GM10248 (cell line): ENCODE measurements at regions of chr15 and their contacts with region 1.

Region 1: DNA sequence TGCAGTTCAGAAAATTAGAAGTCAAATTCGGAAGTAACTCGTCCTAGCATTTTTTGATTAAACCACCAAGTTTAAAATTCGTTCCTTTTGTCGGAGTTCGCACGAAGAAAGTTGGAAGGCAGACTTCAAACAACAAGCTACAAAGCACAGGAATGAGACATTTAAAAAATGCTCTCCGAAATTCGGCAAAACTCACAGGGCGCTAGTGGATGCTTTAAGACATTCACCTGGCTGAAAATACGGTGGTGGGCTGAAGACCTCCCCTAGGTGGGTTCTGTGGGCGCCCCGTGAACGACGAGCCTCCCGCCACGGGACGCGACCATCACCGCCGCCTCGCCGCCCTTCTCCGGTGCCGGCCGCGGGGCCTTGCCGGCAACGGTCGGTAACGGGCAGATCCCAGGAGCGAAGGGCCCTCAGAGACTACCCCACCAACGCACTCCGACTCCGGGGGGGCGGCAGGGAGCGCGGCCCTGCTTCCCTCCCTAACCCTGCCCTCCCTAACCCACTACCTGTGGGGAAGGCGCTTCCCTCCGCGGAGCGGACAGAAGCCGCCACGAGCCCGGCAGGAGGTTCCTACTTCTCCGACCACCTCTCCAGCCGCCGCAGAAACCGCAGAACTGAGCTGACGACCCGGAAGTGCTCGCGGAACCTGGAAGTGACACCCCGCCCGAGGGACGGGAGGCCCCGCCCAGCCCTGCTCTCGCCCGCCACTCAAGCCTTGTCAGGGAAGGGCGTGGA is at the start of gene GTF2A2:
- DNase-seq: peak; percentile 95
- CTCF ChIP-seq: no peak

Region 2: DNA sequence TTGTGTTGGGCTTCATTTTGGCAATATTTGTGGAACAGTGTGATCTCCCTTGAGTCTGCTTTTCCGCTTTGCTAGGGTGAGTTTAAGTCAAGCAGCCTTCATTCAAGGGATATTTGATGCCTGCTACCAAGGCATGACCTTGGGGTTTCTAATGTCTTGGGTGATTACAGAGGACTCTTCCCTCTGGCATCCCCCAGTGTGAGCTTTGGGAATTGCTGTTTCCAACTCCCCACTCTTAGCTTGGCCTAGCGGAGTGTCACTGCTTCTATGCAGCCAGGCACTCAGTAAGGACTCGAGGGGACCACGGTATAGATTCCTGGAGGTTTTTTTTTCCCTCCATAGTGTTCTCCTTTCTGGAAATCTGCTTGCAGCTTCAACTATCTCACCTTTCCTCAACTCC is 24.4 kb before region 1 on chr15:
- CTCF ChIA-PET with region 1: interaction called, 15 read pairs
- POLR2A ChIA-PET with region 1: no interaction called
- DNase-seq: no peak
- CTCF ChIP-seq: no peak

Region 3: GRCh38 chr15:59644756-59645155 is 12.3 kb before region 1 on chr15:
- CTCF ChIA-PET with region 1: interaction called, 15 read pairs
- POLR2A ChIA-PET with region 1: no interaction called
- DNase-seq: no peak
- CTCF ChIP-seq: no peak